ENCODE measurements at regions of chr3 and their contacts with region 1.

Region 1: GRCh38 chr3:38314112-38314763 is 32.1 kb downstream of the SLC22A14 start:
- DNase-seq: no peak
- H3K4me3 ChIP-seq: no peak overlapping the region
- H3K27ac ChIP-seq: no peak overlapping the region
- H3K4me1 ChIP-seq: no peaks in the 10 kb centered on the region
- H3K27me3 ChIP-seq: no peaks in the 10 kb centered on the region
- CTCF ChIP-seq: no peak
- POLR2A ChIP-seq: no peak

Region 2: DNA sequence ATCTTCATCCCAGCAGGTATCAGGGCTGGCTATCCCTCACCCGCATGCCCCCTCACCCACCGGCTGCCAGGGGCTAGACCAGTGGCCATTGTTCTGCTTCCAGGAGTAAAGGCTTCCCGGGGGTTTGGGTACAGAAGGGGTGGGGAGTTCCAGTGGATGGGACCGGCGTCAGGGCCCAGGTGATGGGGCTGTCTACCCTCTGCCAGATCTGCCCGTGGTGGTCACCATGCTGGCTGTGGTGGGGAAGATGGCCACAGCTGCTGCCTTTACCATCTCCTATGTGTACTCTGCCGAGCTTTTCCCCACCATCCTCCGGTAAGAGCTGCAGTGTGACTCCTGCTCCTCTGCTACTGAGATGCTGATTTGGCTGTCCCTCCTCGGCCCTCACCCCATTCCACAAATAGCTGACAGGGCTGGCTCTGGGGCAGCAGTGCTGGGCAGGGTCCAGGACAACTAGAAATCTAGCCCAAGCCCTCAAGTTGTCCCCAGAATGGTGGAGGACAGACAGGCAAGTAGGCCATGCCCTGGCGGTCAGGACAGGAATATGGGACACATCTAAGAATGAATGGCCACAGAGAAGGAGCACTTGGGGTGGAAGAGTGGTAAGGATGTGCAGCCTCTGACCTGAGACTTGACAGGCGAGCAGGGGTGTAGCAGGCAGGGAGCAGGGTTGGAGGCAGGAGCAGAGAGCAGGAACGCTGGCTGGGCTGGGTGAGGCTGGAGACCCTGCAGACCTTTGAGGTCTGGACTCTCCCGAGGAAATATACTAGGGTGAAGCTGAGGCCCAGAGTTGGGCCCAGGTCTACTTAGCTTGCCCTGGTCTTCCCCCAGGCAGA is 37.9 kb before region 1 on chr3:
- intact Hi-C with region 1: loop called (anchors 1 kb)
- DNase-seq: no peak
- H3K4me3 ChIP-seq: no peak overlapping the region
- H3K27ac ChIP-seq: no peak overlapping the region
- H3K4me1 ChIP-seq: no peaks in the 10 kb centered on the region
- H3K27me3 ChIP-seq: no peaks in the 10 kb centered on the region
- CTCF ChIP-seq: no peak
- POLR2A ChIP-seq: no peak

Region 3: DNA sequence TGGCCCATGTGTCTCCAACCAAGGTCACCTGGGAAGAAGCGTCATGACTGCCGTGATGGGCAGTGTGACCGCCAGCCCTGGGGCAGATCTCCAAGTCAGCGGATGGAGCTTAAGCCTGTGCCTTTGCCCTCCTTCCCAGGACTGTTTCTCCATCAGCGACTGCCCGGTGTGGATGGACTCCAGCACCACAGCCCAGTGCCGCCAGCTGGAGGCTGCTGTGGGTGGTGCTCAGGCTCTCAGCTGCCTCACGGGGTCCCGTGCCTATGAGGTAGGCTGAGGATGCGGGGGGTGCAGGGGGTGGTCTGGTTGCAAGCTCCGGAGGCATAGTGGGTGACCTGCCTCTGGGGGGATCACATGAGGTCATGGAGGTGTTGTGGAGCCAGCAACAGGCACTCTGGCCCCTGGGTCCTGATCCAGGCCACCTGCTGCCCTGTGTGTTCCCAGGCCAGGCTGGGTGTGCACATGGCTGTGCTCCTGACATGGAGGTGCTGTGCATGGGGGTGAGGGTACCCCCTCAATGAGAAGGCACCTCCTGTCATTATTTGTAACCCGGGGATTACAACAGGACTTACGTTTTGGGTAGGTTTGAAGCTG is 51.3 kb after region 1 on chr3:
- intact Hi-C with region 1: no loop called
- DNase-seq: no peak
- H3K4me3 ChIP-seq: no peak overlapping the region
- H3K27ac ChIP-seq: no peak overlapping the region
- H3K4me1 ChIP-seq: no peaks in the 10 kb centered on the region
- H3K27me3 ChIP-seq: no peaks in the 10 kb centered on the region
- CTCF ChIP-seq: no peak
- POLR2A ChIP-seq: no peak

Measured in breast epithelium (tissue), 4 donors.